Endothelial cell of umbilical vein (primary cell): ENCODE measurements at regions of chr12 and their contacts with region 1.

Region 1: GRCh38 chr12:79935021-79935623 is at the start of gene PPP1R12A:
- DNase-seq: peak; percentile 99
- H3K4me3 ChIP-seq: peak within 1 kb of the TSS; percentile 69 to 97 (median 84)
- H3K27ac ChIP-seq: peak within 1 kb of the TSS; percentile 82
- H3K4me1 ChIP-seq: peaks cover 22% of the 10 kb centered on the region
- H3K27me3 ChIP-seq: no peaks in the 10 kb centered on the region
- CTCF ChIP-seq: peak in 1 of 2 donors; percentile 14
- POLR2A ChIP-seq: peak; percentile 92
- total RNA-seq, gene PPP1R12A: 83.9 and 86.8 TPM in 2 replicates

Region 2: GRCh38 chr12:79127271-79127751 is 807.8 kb before region 1 on chr12:
- CTCF ChIA-PET with region 1: no interaction called
- POLR2A ChIA-PET with region 1: no interaction called
- dilution Hi-C with region 1: no loop called
- intact Hi-C with region 1: no loop called
- DNase-seq: peak; percentile 6
- H3K4me3 ChIP-seq: no peak overlapping the region
- H3K27ac ChIP-seq: no peak overlapping the region
- H3K4me1 ChIP-seq: no peaks in the 10 kb centered on the region
- H3K27me3 ChIP-seq: no peaks in the 10 kb centered on the region
- CTCF ChIP-seq: no peak
- POLR2A ChIP-seq: no peak

Region 3: DNA sequence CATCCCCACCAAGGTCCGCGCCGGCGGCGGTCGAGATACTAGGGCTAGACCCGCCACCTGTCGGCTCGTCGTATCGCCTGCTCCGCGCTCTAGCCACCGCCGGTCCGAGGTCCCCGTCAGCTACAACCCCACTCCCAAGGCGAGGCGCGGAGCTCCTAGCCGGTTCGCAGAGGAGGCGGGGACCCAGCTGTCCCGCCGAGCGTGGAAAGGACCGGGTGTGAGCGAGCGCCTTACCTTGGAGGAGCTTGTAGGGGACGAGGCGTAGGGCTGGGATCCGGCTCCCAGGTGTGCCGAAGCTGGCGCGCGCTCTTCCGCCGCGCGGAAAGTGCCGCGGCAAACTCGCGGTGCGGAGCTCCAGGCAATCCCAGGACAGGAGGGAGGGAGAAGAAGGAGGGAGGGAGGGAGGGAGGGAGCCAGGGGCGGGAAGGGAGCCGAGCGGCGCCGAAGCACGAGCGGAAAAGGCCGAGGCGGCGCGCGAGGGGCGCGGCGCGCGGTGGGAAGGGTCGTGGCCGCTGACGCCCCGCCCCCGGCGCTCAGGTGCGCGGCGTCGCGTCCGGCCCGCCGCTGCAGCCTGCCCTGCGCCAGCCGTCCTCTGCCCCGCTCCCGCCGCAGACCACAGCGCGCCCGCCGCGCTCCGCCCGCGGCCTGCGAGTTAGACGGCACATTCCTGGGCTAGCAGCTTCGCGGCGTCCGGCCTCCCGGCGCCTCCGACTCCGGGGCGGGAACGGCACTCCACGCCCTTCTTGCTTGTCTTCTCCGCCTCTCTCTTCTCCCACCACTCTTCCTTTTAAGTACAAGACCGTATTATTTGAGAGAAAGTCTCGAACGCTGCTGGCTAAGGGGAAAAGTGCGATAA is 244.3 kb before region 1 on chr12 and contains the start of gene PAWR:
- CTCF ChIA-PET with region 1: no interaction called
- POLR2A ChIA-PET with region 1: no interaction called
- dilution Hi-C with region 1: no loop called
- intact Hi-C with region 1: loop called (anchors 1 kb)
- DNase-seq: peak; percentile 83
- H3K4me3 ChIP-seq: peak within 1 kb of the TSS; percentile 85 to 96 (median 88)
- H3K27ac ChIP-seq: peak within 1 kb of the TSS; percentile 85
- H3K4me1 ChIP-seq: peaks cover 28% of the 10 kb centered on the region
- H3K27me3 ChIP-seq: no peaks in the 10 kb centered on the region
- CTCF ChIP-seq: peak in 1 of 2 donors; percentile 37
- POLR2A ChIP-seq: peak; percentile 21
- total RNA-seq, gene PAWR: 154 and 175 TPM in 2 replicates

Region 4: GRCh38 chr12:79844693-79845092 is 90.4 kb before region 1 on chr12:
- CTCF ChIA-PET with region 1: no interaction called
- POLR2A ChIA-PET with region 1: interaction called, 4 read pairs
- dilution Hi-C with region 1: no loop called
- intact Hi-C with region 1: loop called (anchors 5 kb)
- DNase-seq: peak; percentile 95
- H3K4me3 ChIP-seq: no peak overlapping the region
- H3K27ac ChIP-seq: peak overlapping the region; percentile 65
- H3K4me1 ChIP-seq: peaks cover 58% of the 10 kb centered on the region
- H3K27me3 ChIP-seq: no peaks in the 10 kb centered on the region
- CTCF ChIP-seq: no peak
- POLR2A ChIP-seq: peak; percentile 13

Region 5: DNA sequence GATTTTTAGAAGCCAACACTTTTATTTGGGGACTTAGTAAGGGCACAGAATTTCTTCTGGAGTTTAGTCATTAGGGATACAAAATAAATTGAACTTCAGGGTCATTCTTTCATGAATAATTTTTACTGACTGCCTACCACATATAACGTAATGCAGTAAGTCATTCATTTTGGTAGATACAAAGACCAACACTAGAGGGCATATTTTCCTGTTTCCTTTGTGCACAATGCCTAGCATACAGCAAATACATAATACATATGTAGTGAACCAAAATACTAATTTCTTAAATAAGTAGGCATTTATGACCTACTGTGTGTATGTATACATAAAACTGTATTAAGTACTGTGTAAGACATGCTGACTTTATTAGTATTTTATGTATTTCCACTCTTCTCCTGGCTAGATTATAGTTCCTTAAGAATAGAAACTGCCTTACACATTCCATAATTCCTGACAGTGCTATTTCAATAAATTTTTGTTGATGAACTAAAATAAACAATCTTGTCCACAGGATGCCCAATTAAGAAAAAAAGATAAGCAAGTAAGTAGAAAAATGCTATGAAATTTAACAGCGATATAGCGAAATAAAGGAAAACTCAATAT is 48.1 kb before region 1 on chr12:
- CTCF ChIA-PET with region 1: interaction called, 5 read pairs
- POLR2A ChIA-PET with region 1: no interaction called
- dilution Hi-C with region 1: no loop called
- intact Hi-C with region 1: loop called (anchors 1 kb)
- DNase-seq: peak; percentile 77
- H3K4me3 ChIP-seq: no peak overlapping the region
- H3K27ac ChIP-seq: peak overlapping the region; percentile 3
- H3K4me1 ChIP-seq: peaks cover 30% of the 10 kb centered on the region
- H3K27me3 ChIP-seq: no peaks in the 10 kb centered on the region
- CTCF ChIP-seq: peak; percentile 33 to 39
- POLR2A ChIP-seq: no peak

Region 6: GRCh38 chr12:80056845-80057244 is 121.7 kb after region 1 on chr12:
- CTCF ChIA-PET with region 1: no interaction called
- POLR2A ChIA-PET with region 1: no interaction called
- dilution Hi-C with region 1: no loop called
- intact Hi-C with region 1: loop called (anchors 1 kb)
- DNase-seq: peak; percentile 98
- H3K4me3 ChIP-seq: no peak overlapping the region
- H3K27ac ChIP-seq: no peak overlapping the region
- H3K4me1 ChIP-seq: peaks cover 15% of the 10 kb centered on the region
- H3K27me3 ChIP-seq: peaks cover 0 to 2% of the 10 kb centered on the region in 2 experiments
- CTCF ChIP-seq: no peak
- POLR2A ChIP-seq: no peak

Region 7: GRCh38 chr12:80087486-80088213 is 152.5 kb after region 1 on chr12:
- CTCF ChIA-PET with region 1: no interaction called
- POLR2A ChIA-PET with region 1: no interaction called
- dilution Hi-C with region 1: no loop called
- intact Hi-C with region 1: no loop called
- DNase-seq: no peak
- H3K4me3 ChIP-seq: no peak overlapping the region
- H3K27ac ChIP-seq: no peak overlapping the region
- H3K4me1 ChIP-seq: no peaks in the 10 kb centered on the region
- H3K27me3 ChIP-seq: no peaks in the 10 kb centered on the region
- CTCF ChIP-seq: no peak
- POLR2A ChIP-seq: no peak

Region 8: DNA sequence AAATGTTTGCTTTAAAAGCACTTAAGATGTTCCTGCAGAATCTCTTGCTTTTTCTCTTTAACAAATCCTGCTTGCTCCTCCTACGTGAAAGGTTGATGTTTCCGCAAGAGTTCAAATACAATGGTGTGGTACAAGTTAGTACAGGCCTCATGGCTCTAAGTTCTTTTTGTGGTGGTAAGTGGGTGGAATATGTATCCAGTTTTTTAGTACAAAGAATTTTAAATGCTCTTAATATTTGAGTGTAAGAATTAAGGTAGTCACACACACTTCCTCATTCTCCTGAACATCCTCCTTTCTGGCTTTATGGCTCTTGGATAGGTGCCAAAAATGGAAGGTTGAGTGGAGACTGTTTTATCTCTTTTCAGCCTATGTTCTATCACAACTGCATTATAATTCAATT is 166.0 kb after region 1 on chr12:
- CTCF ChIA-PET with region 1: no interaction called
- POLR2A ChIA-PET with region 1: no interaction called
- dilution Hi-C with region 1: no loop called
- intact Hi-C with region 1: loop called (anchors 1 kb)
- DNase-seq: peak; percentile 59
- H3K4me3 ChIP-seq: no peak overlapping the region
- H3K27ac ChIP-seq: peak overlapping the region; percentile 62
- H3K4me1 ChIP-seq: peaks cover 20% of the 10 kb centered on the region
- H3K27me3 ChIP-seq: no peaks in the 10 kb centered on the region
- CTCF ChIP-seq: no peak
- POLR2A ChIP-seq: no peak

Region 9: GRCh38 chr12:80353257-80353656 is 418.1 kb after region 1 on chr12:
- CTCF ChIA-PET with region 1: no interaction called
- POLR2A ChIA-PET with region 1: no interaction called
- dilution Hi-C with region 1: no loop called
- intact Hi-C with region 1: loop called (anchors 10 kb)
- DNase-seq: peak; percentile 49
- H3K4me3 ChIP-seq: no peak overlapping the region
- H3K27ac ChIP-seq: peak overlapping the region; percentile 58
- H3K4me1 ChIP-seq: peaks cover 51% of the 10 kb centered on the region
- H3K27me3 ChIP-seq: no peaks in the 10 kb centered on the region
- CTCF ChIP-seq: no peak
- POLR2A ChIP-seq: no peak